Activated naive CD4-positive, alpha-beta T cell treated with anti-CD3 and anti-CD28 coated beads for 36 hours (primary cell): ENCODE measurements at regions of chr10 and their contacts with region 1.

Region 1: DNA sequence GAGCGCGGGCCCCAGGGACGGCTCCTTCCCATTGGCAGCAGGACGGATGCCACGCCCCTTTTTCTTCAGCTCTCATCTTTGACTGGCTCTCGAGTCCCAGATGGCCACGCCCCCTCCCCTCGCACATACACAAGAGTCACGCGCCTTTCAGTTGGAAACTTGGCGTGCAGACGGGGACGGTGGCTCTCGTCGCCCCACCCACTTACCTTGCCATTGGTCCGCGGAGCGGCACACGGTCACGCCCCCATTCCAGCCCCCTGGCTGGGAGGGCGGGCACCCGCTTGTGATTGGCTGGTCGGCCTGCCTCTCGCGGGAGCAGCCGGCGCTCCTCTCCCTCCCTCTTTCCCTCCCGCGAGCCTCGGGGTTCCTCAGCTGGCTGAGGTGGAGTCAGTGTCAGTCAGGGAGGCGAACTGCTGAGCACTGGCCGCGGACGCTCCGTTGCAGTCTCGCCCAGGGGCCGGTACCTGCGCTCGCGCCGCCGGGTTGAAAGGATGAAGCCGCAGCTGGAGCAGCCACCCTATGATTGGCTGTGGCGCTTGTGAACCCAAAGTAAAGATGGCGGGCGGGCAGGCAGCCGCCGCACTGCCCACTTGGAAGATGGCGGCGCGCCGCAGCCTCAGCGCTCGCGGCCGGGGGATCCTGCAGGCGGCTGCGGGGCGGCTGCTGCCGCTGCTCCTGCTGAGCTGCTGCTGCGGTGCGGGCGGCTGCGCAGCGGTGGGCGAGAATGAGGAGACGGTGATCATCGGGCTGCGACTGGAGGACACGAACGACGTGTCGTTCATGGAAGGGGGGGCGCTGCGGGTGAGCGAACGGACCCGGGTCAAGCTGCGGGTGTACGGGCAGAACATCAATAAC is at the start of gene CNNM2:
- DNase-seq: peak; percentile 100
- H3K4me3 Mint-ChIP-seq: peak within 1 kb of the TSS; percentile 92
- H3K27ac Mint-ChIP-seq: peak within 1 kb of the TSS; percentile 88
- H3K4me1 Mint-ChIP-seq: peaks cover 49% of the 10 kb centered on the region
- H3K27me3 Mint-ChIP-seq: peaks cover 5% of the 10 kb centered on the region
- total RNA-seq, gene CNNM2: 3.9 to 4.3 TPM

Region 2: DNA sequence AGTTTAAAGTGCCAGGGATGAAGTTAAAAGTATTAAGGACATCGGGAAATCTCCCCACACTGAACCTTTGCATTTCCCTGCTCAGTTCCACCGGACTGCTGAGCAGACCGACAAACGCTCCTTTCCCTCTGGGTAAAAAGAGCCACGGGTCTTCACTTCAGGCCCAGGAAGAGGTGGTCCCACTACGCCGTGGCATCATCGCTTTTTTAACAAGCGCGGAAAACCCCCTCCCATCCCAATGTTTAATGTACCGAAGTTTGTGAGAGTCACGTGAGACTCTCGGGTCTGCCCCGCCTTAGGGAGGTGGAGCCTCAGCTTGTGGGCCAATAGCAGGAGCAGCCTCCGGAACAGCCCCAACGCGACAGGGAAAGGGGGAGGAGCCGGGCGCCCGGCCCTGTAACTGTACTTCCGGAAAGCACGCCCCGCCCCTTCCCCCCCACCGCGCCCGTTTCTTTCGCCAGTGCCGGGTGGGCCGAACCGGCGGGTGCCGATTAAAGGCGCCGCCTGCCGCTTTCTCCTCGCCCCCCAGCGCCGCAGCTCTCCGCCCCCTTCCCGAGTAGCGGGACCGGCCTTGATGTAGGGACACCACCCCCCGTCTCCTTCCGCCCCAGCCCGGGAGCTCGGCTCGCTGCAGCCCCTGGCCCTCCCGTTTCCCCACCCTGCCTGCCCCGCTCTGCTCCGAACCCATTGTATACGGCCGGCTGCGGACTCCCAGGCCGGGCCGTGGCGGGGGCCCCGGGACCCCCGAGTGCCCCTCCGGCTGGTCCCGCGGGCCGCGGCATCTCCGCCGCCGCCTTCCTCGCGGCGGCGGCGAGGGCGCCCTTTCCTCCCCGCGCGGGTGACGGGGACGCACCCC is 276.1 kb before region 1 on chr10:
- CTCF ChIA-PET with region 1: no interaction called
- intact Hi-C with region 1: loop called (anchors 1 kb)
- DNase-seq: peak; percentile 99
- H3K4me3 Mint-ChIP-seq: peak overlapping the region; percentile 83
- H3K27ac Mint-ChIP-seq: peak overlapping the region; percentile 88
- H3K4me1 Mint-ChIP-seq: peaks cover 18% of the 10 kb centered on the region
- H3K27me3 Mint-ChIP-seq: no peaks in the 10 kb centered on the region

Region 3: GRCh38 chr10:102743588-102744373 is 174.4 kb before region 1 on chr10 and contains the start of gene WBP1L:
- CTCF ChIA-PET with region 1: no interaction called
- intact Hi-C with region 1: loop called (anchors 1 kb)
- DNase-seq: peak; percentile 97
- H3K4me3 Mint-ChIP-seq: peak within 1 kb of the TSS; percentile 90
- H3K27ac Mint-ChIP-seq: peak within 1 kb of the TSS; percentile 83
- H3K4me1 Mint-ChIP-seq: peaks cover 43% of the 10 kb centered on the region
- H3K27me3 Mint-ChIP-seq: no peaks in the 10 kb centered on the region
- total RNA-seq, gene WBP1L: 10.5 to 11.8 TPM

Region 4: DNA sequence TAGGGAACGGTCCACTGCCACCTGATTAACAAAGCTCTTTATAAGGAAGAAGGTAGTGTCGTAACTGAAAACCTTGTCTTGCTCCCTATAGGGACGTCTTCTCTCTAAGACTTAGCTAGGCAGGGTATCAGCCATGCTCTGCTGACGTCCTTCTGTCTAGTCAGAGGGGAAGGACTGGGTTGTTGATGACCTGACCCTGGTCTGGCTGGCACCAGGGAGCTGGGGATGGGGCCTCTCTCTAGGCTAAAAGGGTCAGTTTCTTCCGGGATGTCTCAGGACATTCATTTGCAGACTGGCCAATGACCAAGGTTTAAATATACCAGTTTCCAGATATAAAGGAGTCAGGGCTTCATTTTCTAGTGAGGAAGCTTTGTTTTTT is 90.6 kb before region 1 on chr10:
- CTCF ChIA-PET with region 1: no interaction called
- intact Hi-C with region 1: no loop called
- DNase-seq: no peak
- H3K4me3 Mint-ChIP-seq: no peak overlapping the region
- H3K27ac Mint-ChIP-seq: no peak overlapping the region
- H3K4me1 Mint-ChIP-seq: no peaks in the 10 kb centered on the region
- H3K27me3 Mint-ChIP-seq: no peaks in the 10 kb centered on the region

Region 5: GRCh38 chr10:103053659-103054581 is 135.7 kb after region 1 on chr10:
- CTCF ChIA-PET with region 1: interaction called, 23 read pairs
- intact Hi-C with region 1: loop called (anchors 1 kb)
- DNase-seq: peak; percentile 66
- H3K4me3 Mint-ChIP-seq: peak overlapping the region; percentile 63
- H3K27ac Mint-ChIP-seq: peak overlapping the region; percentile 33
- H3K4me1 Mint-ChIP-seq: peaks cover 18% of the 10 kb centered on the region
- H3K27me3 Mint-ChIP-seq: no peaks in the 10 kb centered on the region

Region 6: DNA sequence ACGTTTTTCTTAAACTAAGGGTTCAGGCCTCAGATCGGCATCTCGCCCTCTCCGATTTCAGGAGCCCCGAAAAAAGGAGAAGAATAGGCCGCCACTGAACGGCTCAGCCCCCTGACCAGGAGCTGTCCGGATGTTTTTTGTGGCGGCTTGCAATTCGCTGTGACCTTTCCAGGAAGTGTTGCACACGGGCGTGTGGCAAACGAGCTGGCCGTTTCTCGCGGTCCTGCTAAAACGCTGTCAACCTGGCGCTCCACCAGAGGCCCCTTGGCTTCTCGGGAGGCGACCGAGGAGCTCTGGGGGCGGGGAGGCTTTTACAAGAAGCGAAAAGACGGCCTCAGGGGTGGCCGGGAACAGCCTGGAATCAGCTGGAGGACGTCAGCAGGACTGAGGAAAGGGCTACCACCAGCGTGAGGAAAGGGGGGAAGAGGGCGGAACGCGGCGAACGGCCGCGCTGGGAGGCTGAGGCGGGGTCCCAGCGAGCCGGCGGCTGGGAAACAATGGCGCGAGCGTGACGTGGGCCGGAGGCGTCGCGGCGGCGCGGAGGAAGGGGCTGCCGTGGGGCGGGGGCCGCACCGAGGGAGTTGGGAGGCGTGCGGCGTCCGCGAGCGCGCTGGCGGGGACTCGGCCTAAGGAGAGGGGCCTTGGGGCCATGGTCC is 274.4 kb after region 1 on chr10:
- CTCF ChIA-PET with region 1: interaction called, 5 read pairs
- intact Hi-C with region 1: loop called (anchors 1 kb)
- DNase-seq: peak; percentile 78
- H3K4me3 Mint-ChIP-seq: peak overlapping the region; percentile 87
- H3K27ac Mint-ChIP-seq: peak overlapping the region; percentile 96
- H3K4me1 Mint-ChIP-seq: peaks cover 39% of the 10 kb centered on the region
- H3K27me3 Mint-ChIP-seq: no peaks in the 10 kb centered on the region

Region 7: GRCh38 chr10:103350501-103351260 is 432.5 kb after region 1 on chr10 and contains the start of gene PCGF6:
- CTCF ChIA-PET with region 1: no interaction called
- intact Hi-C with region 1: loop called (anchors 1 kb)
- DNase-seq: peak; percentile 70
- H3K4me3 Mint-ChIP-seq: peak within 1 kb of the TSS; percentile 90
- H3K27ac Mint-ChIP-seq: peak within 1 kb of the TSS; percentile 86
- H3K4me1 Mint-ChIP-seq: peaks cover 12% of the 10 kb centered on the region
- H3K27me3 Mint-ChIP-seq: no peaks in the 10 kb centered on the region
- total RNA-seq, gene PCGF6: 10.6 to 10.7 TPM

Region 8: GRCh38 chr10:103481974-103482531 is 563.9 kb after region 1 on chr10:
- CTCF ChIA-PET with region 1: no interaction called
- intact Hi-C with region 1: loop called (anchors 2 kb)
- DNase-seq: peak; percentile 41
- H3K4me3 Mint-ChIP-seq: no peak overlapping the region
- H3K27ac Mint-ChIP-seq: no peak overlapping the region
- H3K4me1 Mint-ChIP-seq: no peaks in the 10 kb centered on the region
- H3K27me3 Mint-ChIP-seq: no peaks in the 10 kb centered on the region